GM12878 (cell line): ENCODE measurements at regions of chr1 and their contacts with region 1.

Region 1: GRCh38 chr1:235866913-235867845 is 473 bp upstream of the LYST start:
- DNase-seq: peak; percentile 87
- ATAC-seq: peak; percentile 78
- H3K4me3 ChIP-seq: peak overlapping the region; percentile 91
- H3K27ac ChIP-seq: peak overlapping the region; percentile 88
- H3K4me1 ChIP-seq: peaks cover 5% of the 10 kb centered on the region; the same call in 1 of the 2 replicates
- H3K27me3 ChIP-seq: no peaks in the 10 kb centered on the region
- CTCF ChIP-seq: no peak
- EP300 ChIP-seq: no peak
- POLR2A ChIP-seq: peak; percentile 88
- RAD21 ChIP-seq: no peak

Region 2: DNA sequence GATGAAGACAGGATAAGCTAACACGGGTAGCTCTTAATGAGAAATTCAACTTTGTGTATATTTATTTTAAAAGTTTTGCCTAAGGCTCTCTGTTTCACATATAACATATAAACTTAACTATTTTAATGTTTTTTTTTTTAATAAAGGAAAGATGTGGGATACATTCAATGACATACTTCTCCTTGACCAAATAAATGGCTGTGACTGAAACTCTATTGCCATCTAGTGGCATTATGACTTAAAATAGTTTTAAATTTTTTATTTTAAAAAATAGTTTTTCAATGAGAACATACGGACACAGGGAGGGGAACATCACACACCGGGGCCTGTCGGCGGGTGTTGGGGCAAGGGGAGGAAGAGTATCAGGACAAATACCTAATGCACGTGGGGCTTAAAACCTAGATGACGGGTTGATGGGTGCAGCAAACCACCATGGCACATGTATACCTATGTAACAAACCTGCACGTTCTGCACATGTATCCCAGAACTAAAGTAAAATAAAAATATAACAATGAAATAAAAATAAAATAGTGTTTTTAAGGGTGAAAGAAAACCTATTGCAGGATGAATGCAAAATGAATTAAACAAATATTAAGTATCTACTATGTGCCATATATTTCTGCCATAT is 83.9 kb before region 1 on chr1:
- CTCF ChIA-PET with region 1: interaction called, 10 read pairs
- POLR2A ChIA-PET with region 1: no interaction called
- RAD21 ChIA-PET with region 1: no interaction called
- SMC1A ChIA-PET with region 1: interaction called, 4 read pairs
- in situ Hi-C with region 1: no loop called
- intact Hi-C with region 1: no loop called
- DNase-seq: no peak
- ATAC-seq: peak; percentile 57
- H3K4me3 ChIP-seq: no peak overlapping the region
- H3K27ac ChIP-seq: no peak overlapping the region
- H3K4me1 ChIP-seq: no peaks in the 10 kb centered on the region
- H3K27me3 ChIP-seq: no peaks in the 10 kb centered on the region
- CTCF ChIP-seq: peak; percentile 29 to 52 (median 32); a peak in 3 of 6 replicates
- EP300 ChIP-seq: no peak
- POLR2A ChIP-seq: no peak
- RAD21 ChIP-seq: peak; percentile 77

Region 3: DNA sequence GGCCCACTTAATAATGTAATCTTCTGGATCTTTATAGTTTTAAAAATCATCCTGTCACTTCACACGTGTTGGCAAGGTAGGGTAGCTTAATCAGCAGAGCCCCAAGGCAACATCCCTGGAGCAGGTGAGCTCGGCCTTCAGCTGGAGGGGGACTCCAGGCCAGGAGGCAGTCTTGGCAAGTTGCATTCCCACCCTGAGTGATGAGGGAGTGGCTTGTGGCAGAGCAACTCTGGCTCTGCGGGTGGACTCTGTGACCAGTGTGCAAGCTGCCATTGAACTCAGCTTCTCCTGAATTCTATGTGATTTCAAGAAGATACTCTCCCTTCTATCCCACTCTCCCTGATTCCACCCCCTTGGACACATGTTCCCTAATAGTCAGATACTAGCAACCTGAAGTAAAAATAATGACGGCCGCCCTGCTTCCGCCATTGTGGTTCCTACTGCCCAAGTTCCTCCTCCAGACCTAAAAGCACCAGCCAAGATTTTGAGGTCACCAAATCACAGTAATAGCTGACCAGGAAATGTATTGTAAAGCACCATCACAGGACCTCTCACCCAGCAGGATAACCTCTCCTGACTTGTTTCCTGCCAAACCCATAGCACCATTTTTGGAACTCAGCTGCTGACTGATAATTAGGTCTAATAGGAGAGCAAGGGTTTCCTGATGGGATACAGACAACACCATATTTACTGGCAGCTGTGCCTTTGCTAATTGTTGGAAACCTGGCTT is 11.1 kb after region 1 on chr1:
- CTCF ChIA-PET with region 1: interaction called, 12 read pairs
- POLR2A ChIA-PET with region 1: interaction called, 64 read pairs
- RAD21 ChIA-PET with region 1: interaction called, 52 read pairs
- SMC1A ChIA-PET with region 1: interaction called, 84 read pairs
- in situ Hi-C with region 1: no loop called
- intact Hi-C with region 1: no loop called
- DNase-seq: no peak
- ATAC-seq: no peak
- H3K4me3 ChIP-seq: peak overlapping the region; percentile 26; the same call in 1 of the 2 replicates
- H3K27ac ChIP-seq: no peak overlapping the region
- H3K4me1 ChIP-seq: peaks cover 26% of the 10 kb centered on the region
- H3K27me3 ChIP-seq: no peaks in the 10 kb centered on the region
- CTCF ChIP-seq: no peak
- EP300 ChIP-seq: no peak
- POLR2A ChIP-seq: no peak
- RAD21 ChIP-seq: no peak

Region 4: GRCh38 chr1:235917267-235917811 is 50.2 kb after region 1 on chr1:
- CTCF ChIA-PET with region 1: no interaction called
- POLR2A ChIA-PET with region 1: interaction called, 11 read pairs
- RAD21 ChIA-PET with region 1: interaction called, 6 read pairs
- SMC1A ChIA-PET with region 1: interaction called, 11 read pairs
- in situ Hi-C with region 1: no loop called
- intact Hi-C with region 1: no loop called
- DNase-seq: peak; percentile 67
- ATAC-seq: peak; percentile 95
- H3K4me3 ChIP-seq: no peak overlapping the region
- H3K27ac ChIP-seq: no peak overlapping the region
- H3K4me1 ChIP-seq: peaks cover 3% of the 10 kb centered on the region
- H3K27me3 ChIP-seq: no peaks in the 10 kb centered on the region
- CTCF ChIP-seq: no peak
- EP300 ChIP-seq: no peak
- POLR2A ChIP-seq: no peak
- RAD21 ChIP-seq: no peak

Region 5: DNA sequence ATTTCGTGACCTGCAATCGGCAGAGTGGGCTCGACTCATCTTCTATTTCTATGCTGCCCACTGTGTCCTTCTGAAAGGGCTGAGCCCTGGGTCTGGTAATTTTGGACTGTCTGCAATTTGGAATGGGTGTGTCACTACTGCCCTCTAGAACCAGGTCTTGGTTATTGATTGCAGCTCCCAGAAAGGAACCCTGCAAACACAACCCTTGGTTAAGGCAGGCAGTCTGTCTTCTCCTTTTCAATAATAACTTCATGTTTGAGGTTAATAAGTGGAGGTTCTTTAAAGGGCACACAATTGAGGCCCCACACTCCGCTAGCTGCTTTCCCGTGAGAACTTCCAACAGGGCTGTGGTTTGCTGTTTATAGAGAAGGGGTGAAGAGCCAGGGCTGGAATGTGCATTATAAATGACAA is 79.4 kb after region 1 on chr1:
- CTCF ChIA-PET with region 1: interaction called, 13 read pairs
- POLR2A ChIA-PET with region 1: interaction called, 9 read pairs
- RAD21 ChIA-PET with region 1: interaction called, 26 read pairs
- SMC1A ChIA-PET with region 1: interaction called, 20 read pairs
- in situ Hi-C with region 1: no loop called
- intact Hi-C with region 1: no loop called
- DNase-seq: no peak
- ATAC-seq: peak; percentile 86
- H3K4me3 ChIP-seq: no peak overlapping the region
- H3K27ac ChIP-seq: no peak overlapping the region
- H3K4me1 ChIP-seq: peaks cover 17% of the 10 kb centered on the region
- H3K27me3 ChIP-seq: no peaks in the 10 kb centered on the region
- CTCF ChIP-seq: peak; percentile 42 to 58 (median 55); a peak in 5 of 6 replicates
- EP300 ChIP-seq: no peak
- POLR2A ChIP-seq: no peak
- RAD21 ChIP-seq: peak; percentile 73

Region 6: DNA sequence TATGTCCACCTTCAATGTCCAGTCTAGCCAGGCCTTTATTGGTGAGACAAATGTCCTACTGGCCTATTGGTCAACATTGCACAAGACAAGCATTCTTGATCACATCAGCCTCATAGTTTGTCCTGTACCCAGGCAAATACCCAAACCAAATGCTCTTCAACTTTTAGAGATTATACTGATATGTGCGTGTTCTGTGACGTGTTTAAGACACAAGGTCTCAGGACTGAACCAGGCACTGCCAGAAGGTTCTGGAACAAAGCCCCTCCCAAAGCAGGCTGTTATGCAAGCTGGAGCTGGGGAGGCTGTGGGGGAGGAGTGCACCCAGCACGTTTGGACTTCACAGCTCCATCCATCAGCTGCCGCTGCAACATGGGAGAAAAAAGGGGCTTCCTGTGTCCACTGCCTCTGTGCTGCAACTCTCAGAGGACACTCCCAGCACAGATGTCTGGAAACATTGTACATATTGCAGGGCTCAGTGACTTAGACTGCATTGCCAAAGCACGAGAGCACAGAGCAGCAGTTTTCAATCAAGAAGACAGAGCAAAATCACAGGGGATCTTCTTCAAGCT is 151.8 kb after region 1 on chr1:
- CTCF ChIA-PET with region 1: no interaction called
- POLR2A ChIA-PET with region 1: no interaction called
- RAD21 ChIA-PET with region 1: no interaction called
- SMC1A ChIA-PET with region 1: no interaction called
- in situ Hi-C with region 1: no loop called
- intact Hi-C with region 1: no loop called
- DNase-seq: no peak
- ATAC-seq: no peak
- H3K4me3 ChIP-seq: no peak overlapping the region
- H3K27ac ChIP-seq: no peak overlapping the region
- H3K4me1 ChIP-seq: no peaks in the 10 kb centered on the region
- H3K27me3 ChIP-seq: no peaks in the 10 kb centered on the region
- CTCF ChIP-seq: no peak
- EP300 ChIP-seq: no peak
- POLR2A ChIP-seq: no peak
- RAD21 ChIP-seq: no peak

Region 7: DNA sequence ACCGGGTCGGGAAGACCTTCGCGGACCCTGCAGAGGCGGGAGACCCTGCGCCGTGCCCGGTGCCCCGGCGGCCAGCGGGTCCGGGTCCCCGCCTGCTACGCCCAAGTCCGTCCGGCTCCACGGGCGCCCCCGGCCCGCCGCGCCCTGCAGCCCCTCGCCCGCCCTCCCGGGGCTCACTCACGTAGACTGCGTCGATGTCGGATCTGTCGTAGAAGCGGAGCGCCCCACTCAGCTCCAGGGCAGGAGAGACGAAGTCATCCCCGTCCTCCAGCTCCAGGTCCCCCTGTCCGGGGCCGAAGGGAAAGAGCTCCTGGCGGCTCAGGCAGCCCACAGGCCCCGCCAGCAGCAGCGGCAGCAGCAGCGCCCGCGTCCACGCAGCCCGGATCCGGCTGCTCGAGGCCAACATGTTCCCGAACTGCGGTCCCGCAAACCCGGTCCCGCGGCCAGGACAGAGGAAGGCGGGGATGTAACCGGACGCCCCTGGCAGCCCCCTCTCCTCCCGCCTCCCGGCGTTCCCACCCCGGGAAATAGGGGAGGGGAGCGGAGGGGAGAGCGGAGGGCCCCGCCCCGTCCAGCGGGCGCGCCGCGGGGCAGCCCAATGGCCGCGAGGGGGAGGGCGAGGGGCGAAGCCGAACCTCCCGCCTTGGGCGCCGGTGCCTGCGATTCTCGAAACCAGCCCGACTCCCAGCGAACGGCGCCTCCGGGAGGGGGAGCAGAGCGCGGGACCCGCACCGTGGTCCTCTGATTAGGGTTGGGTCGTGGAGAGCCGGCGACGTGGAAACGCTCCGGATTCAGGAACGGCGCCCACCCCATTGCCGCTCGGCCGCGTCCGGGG is 197.7 kb after region 1 on chr1 and contains the start of gene NID1:
- CTCF ChIA-PET with region 1: no interaction called
- POLR2A ChIA-PET with region 1: interaction called, 4 read pairs
- RAD21 ChIA-PET with region 1: interaction called, 3 read pairs
- SMC1A ChIA-PET with region 1: interaction called, 3 read pairs
- in situ Hi-C with region 1: no loop called
- intact Hi-C with region 1: loop called (anchors 5 kb)
- DNase-seq: no peak
- ATAC-seq: peak; percentile 67
- H3K4me3 ChIP-seq: peak within 1 kb of the TSS; percentile 70
- H3K27ac ChIP-seq: peak within 1 kb of the TSS; percentile 41
- H3K4me1 ChIP-seq: peaks cover 12% of the 10 kb centered on the region
- H3K27me3 ChIP-seq: no peaks in the 10 kb centered on the region
- CTCF ChIP-seq: peak in 2 of 3 experiments; percentile 2 to 25; a peak in 2 of 6 replicates
- EP300 ChIP-seq: no peak
- POLR2A ChIP-seq: peak; percentile 11; the same call in 1 of the 2 replicates
- RAD21 ChIP-seq: no peak
- polyA plus RNA-seq, gene NID1: 4.2 to 4.9 TPM